ENCODE measurements at regions of chr11 and their contacts with region 1.

Region 1: DNA sequence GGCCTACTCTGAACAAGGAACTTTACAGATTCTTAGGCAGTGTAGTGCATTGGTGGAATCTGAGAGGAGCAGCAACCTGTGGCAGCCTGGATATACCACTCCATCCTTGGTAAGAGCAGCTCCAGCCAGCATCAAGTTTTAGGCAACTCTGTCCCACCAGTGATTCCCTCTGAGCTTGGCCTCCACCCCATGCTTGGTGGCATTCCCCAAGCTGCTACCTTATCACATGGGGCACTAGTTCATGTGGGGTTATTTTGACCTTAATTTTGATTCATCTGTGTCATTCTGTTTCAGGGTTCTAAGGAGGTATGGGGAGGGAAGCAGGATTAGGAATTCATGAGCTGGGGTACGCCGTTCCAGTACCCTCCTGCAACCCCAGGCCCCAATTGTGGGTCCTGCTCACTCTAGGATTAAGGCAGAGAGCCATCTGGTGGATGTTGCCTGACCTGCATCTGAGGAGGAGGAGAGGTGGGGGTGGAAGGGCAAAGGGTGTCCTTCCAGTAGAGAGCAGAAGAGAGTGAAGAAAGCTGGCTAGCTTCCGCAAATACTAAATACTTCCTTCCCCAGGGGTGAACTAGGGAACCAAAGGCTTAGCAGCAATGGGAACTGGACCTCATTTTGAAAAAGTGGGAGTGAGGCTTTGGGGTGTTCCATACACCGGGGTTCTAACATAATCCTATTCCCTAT is 10.5 kb downstream of the LRRC51 start:
- DNase-seq: peak; percentile 69
- H3K4me3 Mint-ChIP-seq: no peak overlapping the region
- H3K27ac Mint-ChIP-seq: peak overlapping the region; percentile 70
- H3K4me1 Mint-ChIP-seq: no peaks in the 10 kb centered on the region
- H3K27me3 Mint-ChIP-seq: no peaks in the 10 kb centered on the region
- CTCF ChIP-seq: peak; percentile 77

Region 2: GRCh38 chr11:72015511-72016171 is 75.5 kb before region 1 on chr11:
- CTCF ChIA-PET with region 1: interaction called, 155 read pairs
- POLR2A ChIA-PET with region 1: interaction called, 4 read pairs
- intact Hi-C with region 1: no loop called
- DNase-seq: no peak
- H3K4me3 Mint-ChIP-seq: no peak overlapping the region
- H3K27ac Mint-ChIP-seq: no peak overlapping the region
- H3K4me1 Mint-ChIP-seq: peaks cover 34% of the 10 kb centered on the region
- H3K27me3 Mint-ChIP-seq: no peaks in the 10 kb centered on the region
- CTCF ChIP-seq: peak; percentile 20

Region 3: DNA sequence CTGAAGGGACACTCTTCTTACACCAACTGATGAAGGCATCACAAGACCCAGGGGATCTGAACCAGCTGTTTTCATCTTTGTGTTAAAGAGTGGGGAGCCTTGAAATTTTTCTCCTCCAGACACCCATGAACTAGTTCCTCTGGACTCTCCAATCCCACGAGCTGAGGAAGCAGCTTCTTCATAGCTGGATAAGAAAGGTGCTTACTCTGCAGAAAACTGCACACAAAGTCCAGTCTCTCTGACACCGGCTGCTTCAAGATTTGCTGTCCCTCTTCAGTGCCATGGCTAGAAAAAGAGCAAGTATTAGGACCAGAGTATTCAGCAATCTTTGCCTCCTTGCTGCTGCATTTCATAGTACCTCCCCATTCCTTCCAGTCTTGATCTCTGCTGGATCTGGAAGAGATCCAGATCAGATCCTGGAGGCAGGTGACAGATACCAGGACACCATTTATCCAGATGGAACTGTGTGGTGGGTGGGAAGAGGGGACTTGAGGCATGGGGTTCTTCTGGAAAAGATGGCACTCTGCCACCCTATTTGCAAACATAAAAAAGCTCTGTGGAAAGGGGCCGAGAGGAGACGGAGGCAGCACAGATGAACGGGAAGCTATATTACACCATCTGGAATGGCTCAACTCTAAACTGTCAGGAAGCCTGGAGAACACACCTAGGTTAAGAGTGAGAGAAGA is 66.9 kb before region 1 on chr11:
- CTCF ChIA-PET with region 1: interaction called, 155 read pairs
- POLR2A ChIA-PET with region 1: interaction called, 26 read pairs
- intact Hi-C with region 1: loop called (anchors 1 kb)
- DNase-seq: no peak
- H3K4me3 Mint-ChIP-seq: no peak overlapping the region
- H3K27ac Mint-ChIP-seq: peak overlapping the region; percentile 19
- H3K4me1 Mint-ChIP-seq: peaks cover 4% of the 10 kb centered on the region
- H3K27me3 Mint-ChIP-seq: no peaks in the 10 kb centered on the region
- CTCF ChIP-seq: no peak

Region 4: GRCh38 chr11:72102946-72103753 is 12.0 kb after region 1 on chr11 and contains the start of gene LAMTOR1:
- CTCF ChIA-PET with region 1: interaction called, 34 read pairs
- POLR2A ChIA-PET with region 1: interaction called, 42 read pairs
- intact Hi-C with region 1: no loop called
- DNase-seq: peak; percentile 98
- H3K4me3 Mint-ChIP-seq: peak within 1 kb of the TSS; percentile 100
- H3K27ac Mint-ChIP-seq: peak within 1 kb of the TSS; percentile 100
- H3K4me1 Mint-ChIP-seq: peaks cover 43% of the 10 kb centered on the region
- H3K27me3 Mint-ChIP-seq: no peaks in the 10 kb centered on the region
- CTCF ChIP-seq: peak; percentile 29
- total RNA-seq, gene LAMTOR1: 76.9 and 82.4 TPM in 2 replicates

Region 5: GRCh38 chr11:72125951-72126350 is 34.8 kb after region 1 on chr11:
- CTCF ChIA-PET with region 1: no interaction called
- POLR2A ChIA-PET with region 1: no interaction called
- intact Hi-C with region 1: no loop called
- DNase-seq: no peak
- H3K4me3 Mint-ChIP-seq: no peak overlapping the region
- H3K27ac Mint-ChIP-seq: no peak overlapping the region
- H3K4me1 Mint-ChIP-seq: no peaks in the 10 kb centered on the region
- H3K27me3 Mint-ChIP-seq: no peaks in the 10 kb centered on the region
- CTCF ChIP-seq: no peak

Region 6: DNA sequence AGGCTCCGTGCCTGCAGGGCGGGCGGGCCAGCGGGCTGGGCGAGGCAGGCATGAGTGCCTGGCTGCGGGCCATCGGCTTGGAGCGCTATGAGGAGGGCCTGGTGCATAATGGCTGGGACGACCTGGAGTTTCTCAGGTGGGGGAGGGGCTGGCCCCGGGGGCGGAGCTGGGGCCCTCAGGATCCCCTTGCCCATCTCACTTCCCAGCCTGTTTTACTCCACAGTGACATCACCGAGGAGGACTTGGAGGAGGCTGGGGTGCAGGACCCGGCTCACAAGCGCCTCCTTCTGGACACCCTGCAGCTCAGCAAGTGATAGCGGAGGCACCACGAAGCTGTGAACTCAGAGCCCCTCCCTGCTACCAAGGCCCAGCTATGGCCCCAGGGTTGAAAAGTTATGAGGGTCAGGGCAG is 146.9 kb after region 1 on chr11:
- CTCF ChIA-PET with region 1: no interaction called
- POLR2A ChIA-PET with region 1: no interaction called
- intact Hi-C with region 1: no loop called
- DNase-seq: peak; percentile 60
- H3K4me3 Mint-ChIP-seq: no peak overlapping the region
- H3K27ac Mint-ChIP-seq: no peak overlapping the region
- H3K4me1 Mint-ChIP-seq: peaks cover 9% of the 10 kb centered on the region
- H3K27me3 Mint-ChIP-seq: no peaks in the 10 kb centered on the region
- CTCF ChIP-seq: peak; percentile 60